ENCODE measurements at regions of chr2 and their contacts with region 1.

Region 1: GRCh38 chr2:205077159-205077558 is 531.9 kb downstream of the PARD3B start:
- DNase-seq: peak; percentile 79
- H3K4me3 Mint-ChIP-seq: peak overlapping the region; percentile 66
- H3K27ac Mint-ChIP-seq: peak overlapping the region; percentile 62
- H3K4me1 Mint-ChIP-seq: peaks cover 38% of the 10 kb centered on the region
- H3K27me3 Mint-ChIP-seq: no peaks in the 10 kb centered on the region

Region 2: GRCh38 chr2:205024822-205025518 is 52.2 kb before region 1 on chr2:
- intact Hi-C with region 1: loop called (anchors 1 kb)
- DNase-seq: peak; percentile 73
- H3K4me3 Mint-ChIP-seq: peak overlapping the region; percentile 51
- H3K27ac Mint-ChIP-seq: peak overlapping the region; percentile 35
- H3K4me1 Mint-ChIP-seq: peaks cover 25% of the 10 kb centered on the region
- H3K27me3 Mint-ChIP-seq: no peaks in the 10 kb centered on the region

Measured in activated CD4-positive, alpha-beta T cell treated with anti-CD3 and anti-CD28 coated beads, Interleukin-2, amount 10 ng/mL, durations not matched to agents 24 days and 14 days (primary cell).